ENCODE measurements at regions of chr1 and their contacts with region 1.

Region 1: GRCh38 chr1:58699011-58699762 is 675 bp downstream of the MYSM1 start:
- DNase-seq: no peak
- H3K4me3 Mint-ChIP-seq: peak overlapping the region; percentile 100
- H3K27ac Mint-ChIP-seq: peak overlapping the region; percentile 99
- H3K4me1 Mint-ChIP-seq: peaks cover 15% of the 10 kb centered on the region
- H3K27me3 Mint-ChIP-seq: no peaks in the 10 kb centered on the region

Region 2: DNA sequence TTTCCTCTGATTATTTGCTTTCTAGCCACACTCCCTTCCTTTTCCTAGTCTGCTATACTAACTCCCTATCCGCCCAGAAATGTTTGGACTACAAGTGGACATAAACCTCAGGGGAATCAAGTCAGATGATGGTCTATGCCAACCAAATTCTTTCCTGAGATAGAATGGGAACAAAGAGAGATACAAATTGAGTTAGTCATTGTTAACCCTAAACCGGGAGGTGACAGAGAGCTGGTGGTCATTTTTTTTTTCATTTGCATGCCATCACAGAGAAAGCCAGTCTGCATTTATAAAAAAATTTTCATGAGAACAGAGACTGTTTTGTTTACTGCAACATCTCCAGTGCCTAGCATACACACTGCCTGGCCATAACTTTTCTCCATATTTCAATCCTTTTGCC is 34.3 kb before region 1 on chr1:
- intact Hi-C with region 1: loop called (anchors 5 kb)
- DNase-seq: no peak
- H3K4me3 Mint-ChIP-seq: no peak overlapping the region
- H3K27ac Mint-ChIP-seq: no peak overlapping the region
- H3K4me1 Mint-ChIP-seq: no peaks in the 10 kb centered on the region
- H3K27me3 Mint-ChIP-seq: no peaks in the 10 kb centered on the region

Region 3: GRCh38 chr1:58683519-58683918 is 15.7 kb before region 1 on chr1:
- intact Hi-C with region 1: loop called (anchors 2 kb)
- DNase-seq: no peak
- H3K4me3 Mint-ChIP-seq: no peak overlapping the region
- H3K27ac Mint-ChIP-seq: no peak overlapping the region
- H3K4me1 Mint-ChIP-seq: peaks cover 27% of the 10 kb centered on the region
- H3K27me3 Mint-ChIP-seq: no peaks in the 10 kb centered on the region

Region 4: DNA sequence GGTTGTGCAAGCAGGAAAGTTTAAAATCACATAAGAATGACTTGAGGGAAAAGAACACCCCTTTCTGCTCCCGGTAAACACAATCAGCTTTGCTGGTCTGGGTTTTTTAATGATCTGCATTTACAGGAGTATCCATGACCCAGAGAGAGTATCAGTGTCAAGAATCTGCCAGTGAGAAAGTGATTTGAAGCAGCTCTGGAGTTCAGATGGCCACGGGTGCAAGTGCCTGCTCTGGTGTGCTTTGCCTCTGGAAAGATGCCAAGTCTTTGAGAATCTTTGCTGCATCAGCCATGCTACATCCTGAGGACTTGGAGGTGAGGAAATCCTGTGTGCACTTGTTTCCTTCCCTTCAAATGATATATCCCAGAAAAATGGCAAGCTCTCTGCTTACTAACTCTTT is 19.2 kb after region 1 on chr1:
- intact Hi-C with region 1: loop called (anchors 2 kb)
- DNase-seq: no peak
- H3K4me3 Mint-ChIP-seq: peak overlapping the region; percentile 62
- H3K27ac Mint-ChIP-seq: peak overlapping the region; percentile 80
- H3K4me1 Mint-ChIP-seq: peaks cover 50% of the 10 kb centered on the region
- H3K27me3 Mint-ChIP-seq: peaks cover 3% of the 10 kb centered on the region

Region 5: DNA sequence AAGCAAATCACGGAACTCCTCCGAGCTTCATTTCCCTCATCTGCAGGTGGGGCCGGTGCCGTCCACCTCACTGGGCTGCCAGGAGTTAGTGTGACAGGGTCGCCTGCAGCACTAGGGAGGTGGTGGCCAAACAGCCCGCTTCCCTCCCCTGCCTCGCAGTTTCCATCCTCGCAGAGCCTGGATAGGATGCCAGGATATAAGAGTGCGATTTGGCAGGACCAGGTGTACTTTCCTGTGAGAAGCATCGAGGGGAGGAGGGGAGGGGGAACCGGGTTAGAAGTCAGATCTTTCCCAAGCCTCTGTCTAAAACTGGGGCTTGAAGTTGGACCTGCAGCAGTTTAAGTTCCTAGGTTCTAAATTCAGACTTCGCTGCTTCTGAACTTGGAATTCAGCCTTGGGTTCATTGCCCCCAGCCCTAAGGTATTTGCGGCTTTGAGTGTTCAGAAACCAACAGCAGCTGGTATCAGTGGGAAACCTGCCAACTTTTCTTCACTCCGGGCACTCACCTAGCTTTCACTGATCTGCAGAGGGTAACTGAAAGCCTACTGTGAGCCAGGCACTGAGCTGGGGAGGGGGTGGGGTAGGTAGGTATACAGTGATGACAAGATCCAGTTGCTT is 86.4 kb after region 1 on chr1:
- intact Hi-C with region 1: no loop called
- DNase-seq: peak; percentile 14
- H3K4me3 Mint-ChIP-seq: peak overlapping the region; percentile 91
- H3K27ac Mint-ChIP-seq: peak overlapping the region; percentile 93
- H3K4me1 Mint-ChIP-seq: peaks cover 16% of the 10 kb centered on the region
- H3K27me3 Mint-ChIP-seq: peaks cover 10% of the 10 kb centered on the region